BJ (cell line): ENCODE measurements at regions of chr22 and their contacts with region 1.

Region 1: GRCh38 chr22:24433813-24434470 is 6.5 kb downstream of the ADORA2A start:
- DNase-seq: no peak
- H3K4me3 ChIP-seq: no peak overlapping the region
- H3K27me3 ChIP-seq: no peaks in the 10 kb centered on the region
- CTCF ChIP-seq: no peak

Region 2: DNA sequence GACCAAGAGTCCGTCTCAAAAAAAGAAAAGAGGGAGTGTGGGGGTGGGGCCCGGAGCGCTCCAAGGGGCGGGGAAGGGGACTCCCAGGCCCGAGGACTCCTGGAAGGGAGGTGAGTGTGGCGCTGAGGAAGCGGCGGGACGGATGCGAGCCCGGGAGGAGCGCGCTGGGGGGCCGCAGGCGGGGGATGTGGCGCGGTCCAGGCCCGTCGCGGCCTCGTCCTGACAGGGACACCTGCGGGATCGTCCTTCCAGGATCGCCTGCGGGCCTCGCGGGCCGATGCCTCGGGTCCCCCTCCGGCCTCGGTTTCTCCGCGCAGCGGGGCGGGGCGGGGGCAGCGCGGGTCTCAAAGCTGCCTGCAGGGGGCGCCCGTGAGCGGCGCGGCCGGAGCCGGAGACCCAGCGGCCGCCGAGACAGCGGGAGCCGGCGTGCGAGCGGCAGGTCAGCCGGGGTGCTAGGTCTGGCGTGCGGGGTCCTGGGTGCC is 10.4 kb before region 1 on chr22:
- CTCF ChIA-PET with region 1: interaction called, 44 read pairs
- POLR2A ChIA-PET with region 1: no interaction called
- DNase-seq: no peak
- H3K4me3 ChIP-seq: peak overlapping the region; percentile 56
- H3K27me3 ChIP-seq: peaks cover 7% of the 10 kb centered on the region
- CTCF ChIP-seq: peak; percentile 43

Region 3: DNA sequence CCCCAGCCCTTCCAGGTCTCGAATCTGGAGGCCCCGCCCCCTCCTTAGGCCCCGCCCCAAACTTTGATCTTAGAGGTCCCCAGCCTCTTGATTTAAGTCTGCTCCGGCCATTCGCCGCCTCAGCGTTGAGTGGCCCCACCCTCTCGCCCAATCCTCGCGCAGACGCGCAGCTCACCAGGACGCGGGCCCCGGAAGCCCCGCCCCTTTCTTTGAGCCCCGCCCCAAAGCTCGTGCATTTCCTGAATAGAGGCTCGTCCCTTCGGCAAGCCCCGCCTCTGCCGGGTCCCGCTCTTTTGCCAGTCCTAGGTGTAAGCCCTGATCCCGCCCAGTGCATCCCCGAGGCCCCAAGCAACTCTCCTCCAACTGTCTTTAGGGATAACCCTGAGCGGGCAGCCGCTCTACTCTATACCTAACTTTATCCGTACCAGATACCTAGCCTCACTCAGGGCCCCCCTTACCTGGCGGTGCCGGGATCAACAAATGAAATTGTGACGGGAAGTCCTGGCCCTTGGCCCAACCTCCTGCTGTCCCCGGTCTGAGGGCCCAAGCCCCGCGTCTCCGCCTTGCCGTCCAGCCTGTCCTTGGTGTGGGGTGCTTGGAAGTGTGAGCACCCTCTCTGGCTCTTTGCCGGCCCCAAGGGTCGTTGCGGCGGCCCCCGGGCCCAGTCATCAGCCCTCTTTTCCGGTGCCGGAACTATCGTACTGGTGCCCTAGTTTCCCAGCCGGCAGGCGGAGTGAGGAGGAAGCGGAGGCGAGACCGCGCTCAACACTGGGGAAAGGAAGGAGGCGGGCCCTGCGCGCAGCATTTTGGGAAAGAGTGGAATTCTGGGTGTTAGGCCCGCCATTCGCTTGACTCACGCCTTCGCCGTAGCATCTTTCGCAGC is 121.5 kb after region 1 on chr22 and contains the start of gene SNRPD3:
- CTCF ChIA-PET with region 1: no interaction called
- POLR2A ChIA-PET with region 1: interaction called, 10 read pairs
- DNase-seq: peak; percentile 95
- H3K4me3 ChIP-seq: peak within 1 kb of the TSS; percentile 92
- H3K27me3 ChIP-seq: no peaks in the 10 kb centered on the region
- CTCF ChIP-seq: peak; percentile 35; the same call in 1 of the 2 replicates
- polyA plus RNA-seq, gene SNRPD3: 168 and 231 TPM in 2 replicates